ENCODE measurements at regions of chr15 and their contacts with region 1.

Region 1: DNA sequence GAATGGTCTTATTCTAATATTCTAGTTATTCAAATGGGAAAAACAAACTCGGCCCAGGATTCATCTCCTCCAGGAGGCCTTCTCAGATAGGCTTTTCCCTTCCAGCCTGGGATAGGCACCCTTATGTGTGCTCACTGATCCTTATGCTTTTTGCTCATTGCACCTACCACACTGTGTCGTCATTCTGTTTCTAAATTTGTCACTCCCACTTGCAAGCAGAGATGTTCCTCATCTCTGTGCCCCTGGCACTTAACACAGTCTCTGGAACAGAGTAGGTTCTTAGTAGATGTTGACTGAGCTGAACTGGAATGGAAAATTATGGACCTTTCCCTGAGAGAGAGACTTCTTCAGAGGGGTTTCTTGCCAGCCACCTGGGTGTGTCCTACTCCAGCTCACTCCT is 18.7 kb upstream of the SPG11 start:
- DNase-seq: no peak
- ATAC-seq: no peak
- H3K4me3 Mint-ChIP-seq: peak overlapping the region; percentile 72
- H3K27ac Mint-ChIP-seq: peak overlapping the region; percentile 88
- H3K4me1 Mint-ChIP-seq: peaks cover 69% of the 10 kb centered on the region
- H3K27me3 Mint-ChIP-seq: no peaks in the 10 kb centered on the region

Region 2: DNA sequence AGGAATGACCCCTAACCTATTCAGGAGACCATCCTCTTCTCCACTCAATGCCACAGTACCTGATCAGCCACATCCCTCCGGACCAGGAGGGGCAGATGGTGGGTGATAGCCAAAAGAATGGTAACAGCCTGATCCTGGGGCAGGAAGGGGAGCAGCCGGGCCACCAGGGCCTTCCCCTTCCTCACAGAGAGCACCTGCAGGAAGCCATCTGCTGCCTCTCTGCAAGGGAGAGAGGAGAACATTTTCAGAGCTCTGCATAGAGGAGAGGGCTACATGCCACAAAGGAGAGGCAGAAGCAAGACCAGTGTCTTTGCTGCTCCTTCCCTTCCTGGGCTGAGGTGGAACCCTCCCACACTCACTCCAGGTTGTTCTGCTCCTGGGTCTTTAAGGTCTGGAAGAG is 13.3 kb before region 1 on chr15:
- POLR2A ChIA-PET with region 1: interaction called, 150 read pairs
- DNase-seq: no peak
- ATAC-seq: peak; percentile 20
- H3K4me3 Mint-ChIP-seq: no peak overlapping the region
- H3K27ac Mint-ChIP-seq: peak overlapping the region; percentile 67
- H3K4me1 Mint-ChIP-seq: peaks cover 58% of the 10 kb centered on the region
- H3K27me3 Mint-ChIP-seq: no peaks in the 10 kb centered on the region

Region 3: GRCh38 chr15:44728576-44729407 is 46.6 kb after region 1 on chr15:
- POLR2A ChIA-PET with region 1: interaction called, 38 read pairs
- DNase-seq: peak; percentile 91
- ATAC-seq: peak; percentile 79
- H3K4me3 Mint-ChIP-seq: peak overlapping the region; percentile 98
- H3K27ac Mint-ChIP-seq: peak overlapping the region; percentile 100
- H3K4me1 Mint-ChIP-seq: peaks cover 62% of the 10 kb centered on the region
- H3K27me3 Mint-ChIP-seq: no peaks in the 10 kb centered on the region

Measured in activated naive CD8-positive, alpha-beta T cell treated with anti-CD3 and anti-CD28 coated beads, Interleukin-2, amount 10 ng/mL, durations not matched to agents 7 days and 5 days (primary cell).